Activated naive CD4-positive, alpha-beta T cell treated with anti-CD3 and anti-CD28 coated beads for 36 hours (primary cell): ENCODE measurements at regions of chr12 and their contacts with region 1.

Region 1: GRCh38 chr12:27207615-27208413 is 36.3 kb upstream of the STK38L start:
- DNase-seq: peak; percentile 74
- H3K4me3 Mint-ChIP-seq: no peak overlapping the region
- H3K27ac Mint-ChIP-seq: peak overlapping the region; percentile 38
- H3K4me1 Mint-ChIP-seq: peaks cover 19% of the 10 kb centered on the region
- H3K27me3 Mint-ChIP-seq: no peaks in the 10 kb centered on the region

Region 2: DNA sequence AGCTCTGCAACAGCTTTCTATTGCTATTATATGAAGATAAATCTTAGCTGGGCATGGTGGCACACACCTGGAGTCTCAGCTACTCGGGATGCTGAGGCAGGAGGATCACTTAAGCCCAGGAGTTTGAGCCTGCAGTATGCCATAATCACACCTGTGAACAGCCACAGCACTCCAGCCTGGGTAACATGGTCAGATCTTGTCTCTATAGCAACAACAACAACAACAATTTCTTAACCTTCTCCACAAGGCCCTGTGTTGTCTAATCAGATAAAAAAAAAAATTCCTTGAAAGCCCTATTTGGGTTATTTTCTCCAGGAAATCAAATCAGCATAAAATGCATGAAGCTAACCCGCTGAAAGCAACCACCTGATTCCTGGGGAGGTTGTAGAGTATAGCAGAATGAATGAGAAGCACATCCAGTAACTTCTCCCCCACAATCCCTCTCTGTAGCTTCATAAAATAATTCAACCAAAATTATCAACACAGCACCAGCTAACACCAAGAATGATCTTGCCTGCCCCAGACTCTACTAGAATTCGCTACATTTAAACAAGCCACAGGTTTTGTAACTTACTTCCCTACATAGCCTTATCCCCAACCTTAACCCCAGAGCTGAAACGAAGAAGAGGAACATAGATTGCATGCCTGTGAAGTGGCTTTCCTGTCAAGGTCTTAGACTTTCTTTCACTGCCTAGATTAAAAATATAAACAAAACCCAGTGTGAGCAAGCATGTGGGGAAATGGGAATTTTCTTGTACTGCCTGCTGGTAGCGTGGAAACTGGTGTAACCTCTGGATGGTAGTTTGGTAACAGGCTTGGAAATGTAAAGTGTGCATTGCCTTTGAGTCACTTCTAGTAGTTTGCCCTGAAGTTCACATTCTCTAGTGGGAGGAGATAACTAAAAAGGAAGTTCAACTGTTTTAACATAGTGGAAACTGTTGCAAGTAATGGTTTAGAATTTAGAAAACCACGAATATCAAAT is 30.3 kb after region 1 on chr12:
- CTCF ChIA-PET with region 1: no interaction called
- intact Hi-C with region 1: loop called (anchors 1 kb)
- DNase-seq: peak; percentile 16
- H3K4me3 Mint-ChIP-seq: peak overlapping the region; percentile 13
- H3K27ac Mint-ChIP-seq: peak overlapping the region; percentile 64
- H3K4me1 Mint-ChIP-seq: peaks cover 33% of the 10 kb centered on the region
- H3K27me3 Mint-ChIP-seq: no peaks in the 10 kb centered on the region